Aorta (tissue), 5 donors: ENCODE measurements at regions of chr2 and their contacts with region 1.

Region 1: DNA sequence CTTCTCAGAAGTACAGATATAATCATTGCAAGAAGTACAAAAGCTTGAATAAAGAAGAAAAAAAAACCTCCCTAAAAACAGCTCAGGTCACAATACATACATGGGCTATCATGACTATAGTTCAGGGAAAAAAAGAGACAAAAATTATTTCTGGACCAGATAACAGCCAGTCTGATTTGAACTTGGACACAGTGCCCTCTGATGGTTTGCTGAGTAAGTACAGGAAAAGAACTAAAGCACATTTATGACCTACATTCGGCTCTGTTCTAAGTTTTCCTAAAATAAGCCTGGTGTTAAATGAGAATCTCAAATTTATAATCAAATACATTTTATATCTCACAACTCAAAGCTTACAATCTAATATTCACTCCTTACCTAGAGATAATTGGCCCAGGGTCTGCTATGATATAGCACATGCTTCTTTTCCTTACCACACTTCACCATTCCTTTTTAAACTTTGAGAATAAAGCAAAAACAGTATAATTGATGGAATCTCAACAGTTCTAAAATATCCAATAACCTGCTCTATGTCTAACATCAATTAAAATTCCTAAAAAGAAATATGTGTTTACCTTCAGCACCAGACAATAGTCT is 81.1 kb downstream of the RAPH1 start:
- DNase-seq: no peak
- ATAC-seq: peak; percentile 86
- H3K4me3 ChIP-seq: no peak overlapping the region
- H3K27ac ChIP-seq: no peak overlapping the region
- H3K4me1 ChIP-seq: no peaks in the 10 kb centered on the region
- H3K27me3 ChIP-seq: no peaks in the 10 kb centered on the region

Region 2: DNA sequence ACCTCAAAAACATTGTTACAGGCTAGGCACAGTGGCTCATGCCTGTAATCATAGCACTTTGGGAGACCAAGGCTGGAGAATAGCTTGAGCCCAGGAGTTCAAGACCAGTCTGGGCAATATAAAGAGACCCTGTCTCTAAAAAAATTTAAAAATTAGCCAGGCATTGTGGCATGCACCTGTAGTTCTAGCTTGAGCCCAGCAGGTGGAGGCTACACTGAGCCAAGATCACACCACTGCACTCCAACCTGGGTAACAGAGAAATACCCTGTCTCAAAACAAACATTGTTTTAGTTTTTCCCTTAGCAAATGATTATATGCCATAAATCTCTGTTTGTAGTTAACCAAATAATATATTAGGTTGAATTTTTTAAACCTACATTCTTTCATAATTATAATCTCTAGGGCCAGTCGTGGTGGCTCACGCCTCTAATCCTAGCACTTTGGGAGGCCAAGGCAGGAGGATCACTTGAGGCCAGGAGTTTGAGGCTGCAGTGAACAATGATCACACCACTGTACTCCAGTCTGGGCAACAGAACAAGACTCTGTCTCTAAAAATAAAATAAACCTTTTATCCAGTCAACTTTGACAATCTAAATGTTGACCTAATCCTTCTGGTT is 228.4 kb before region 1 on chr2:
- intact Hi-C with region 1: loop called in 1 of 2 experiments (anchors 10 kb)
- DNase-seq: no peak
- ATAC-seq: no peak
- H3K4me3 ChIP-seq: no peak overlapping the region
- H3K27ac ChIP-seq: no peak overlapping the region
- H3K4me1 ChIP-seq: no peaks in the 10 kb centered on the region
- H3K27me3 ChIP-seq: no peaks in the 10 kb centered on the region

Region 3: DNA sequence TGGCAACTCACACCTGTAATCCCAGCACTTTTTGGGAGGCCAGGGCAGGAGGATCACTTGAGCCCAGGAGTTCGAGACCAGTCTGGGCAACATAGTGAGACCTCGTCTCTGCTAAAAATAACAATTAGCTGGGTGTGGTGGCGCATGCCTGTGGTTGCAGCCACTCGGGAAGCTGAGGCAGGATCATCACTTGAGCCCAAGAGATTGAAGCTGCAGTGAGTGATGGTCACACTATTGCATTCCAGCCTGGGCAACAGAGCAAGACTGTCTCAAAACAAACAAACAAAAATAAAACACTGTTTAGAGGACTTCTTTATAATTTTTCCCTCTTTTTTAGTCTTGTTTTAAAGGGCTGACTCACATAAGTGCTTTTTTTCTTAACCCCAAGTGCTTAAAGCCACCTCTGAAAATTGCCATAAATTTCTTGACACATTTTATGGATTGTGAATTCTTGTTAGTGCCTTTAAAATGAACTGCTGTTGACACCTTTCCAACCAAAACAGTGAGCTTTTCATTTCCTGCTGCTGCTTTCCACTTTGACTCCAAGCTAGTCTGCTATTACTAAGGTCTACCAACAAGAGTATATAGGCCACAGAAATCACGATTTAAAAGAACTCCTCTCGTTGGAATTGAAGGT is 173.4 kb before region 1 on chr2:
- intact Hi-C with region 1: loop called in 1 of 2 experiments (anchors 10 kb)
- DNase-seq: no peak
- ATAC-seq: no peak
- H3K4me3 ChIP-seq: no peak overlapping the region
- H3K27ac ChIP-seq: peak overlapping the region in 1 of 2 donors; percentile 7
- H3K4me1 ChIP-seq: peaks cover 0 to 1% of the 10 kb centered on the region in 2 donors
- H3K27me3 ChIP-seq: no peaks in the 10 kb centered on the region

Region 4: DNA sequence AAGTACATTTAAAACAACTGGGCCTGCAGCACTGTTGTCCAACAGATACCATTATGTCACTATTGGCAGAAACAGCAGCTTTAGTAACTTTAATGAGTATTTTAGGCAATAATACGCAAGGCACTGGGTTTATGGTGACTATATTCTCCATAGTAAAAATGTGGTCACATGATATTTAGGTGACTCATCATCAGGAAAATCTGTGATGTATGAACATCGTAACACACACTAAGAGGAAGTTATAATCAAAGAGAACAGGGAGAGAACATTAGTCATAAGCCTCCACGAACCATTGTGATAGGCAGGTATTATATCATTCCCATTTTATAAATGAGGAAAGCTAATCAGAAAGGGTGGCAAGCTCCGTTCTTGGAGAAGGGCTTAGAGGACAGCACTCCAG is 44.2 kb after region 1 on chr2:
- intact Hi-C with region 1: no loop called
- DNase-seq: no peak
- ATAC-seq: peak; percentile 36
- H3K4me3 ChIP-seq: no peak overlapping the region
- H3K27ac ChIP-seq: no peak overlapping the region
- H3K4me1 ChIP-seq: no peaks in the 10 kb centered on the region
- H3K27me3 ChIP-seq: no peaks in the 10 kb centered on the region